ENCODE measurements at regions of chr7 and their contacts with region 1.

Region 1: GRCh38 chr7:1412322-1413261 is 46.7 kb downstream of the MICALL2 start:
- DNase-seq: peak; percentile 90
- H3K4me3 Mint-ChIP-seq: peak overlapping the region; percentile 16
- H3K27ac Mint-ChIP-seq: no peak overlapping the region
- H3K4me1 Mint-ChIP-seq: peaks cover 11% of the 10 kb centered on the region
- H3K27me3 Mint-ChIP-seq: peaks cover 2% of the 10 kb centered on the region

Region 2: DNA sequence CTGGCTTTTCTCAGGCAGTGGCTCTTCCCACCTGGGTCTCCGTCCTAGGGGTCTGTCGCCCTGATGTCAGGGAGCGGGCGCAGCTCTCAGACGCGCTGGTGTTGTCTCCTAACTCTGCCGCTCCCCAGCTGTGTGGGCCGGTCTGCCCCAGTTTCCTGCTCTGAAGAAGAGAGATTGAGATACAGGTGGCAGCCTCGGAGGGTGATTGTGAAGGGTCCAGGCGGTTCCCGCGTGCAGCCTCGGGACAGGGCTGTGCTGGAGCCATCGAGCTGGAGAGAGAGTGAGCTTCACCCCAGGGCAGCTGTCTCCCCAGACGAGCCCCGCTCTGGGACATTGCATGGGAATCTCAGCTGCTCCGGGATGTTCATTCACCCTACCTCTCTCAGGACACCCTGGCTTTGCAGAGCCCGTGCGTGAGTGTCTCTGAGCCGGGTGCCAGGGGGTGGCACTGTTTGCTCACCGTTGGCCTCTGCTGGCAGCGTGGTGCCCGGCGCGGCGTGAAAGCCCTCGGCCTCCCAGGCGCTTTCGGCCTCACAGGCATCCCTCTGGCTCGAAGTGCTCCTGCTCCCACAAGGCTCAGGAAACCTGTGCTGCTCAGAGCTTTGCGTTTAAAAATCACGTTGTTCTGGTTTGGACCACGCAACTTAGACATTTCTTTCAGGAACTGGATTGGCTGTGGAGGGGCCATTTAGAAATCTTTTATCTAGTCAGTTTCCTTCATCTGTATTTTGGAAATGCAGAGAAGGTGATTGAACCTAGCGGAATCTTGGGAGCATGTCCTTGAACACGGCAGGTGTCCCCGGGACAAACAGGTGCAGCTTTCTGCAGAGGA is 218.8 kb before region 1 on chr7:
- CTCF ChIA-PET with region 1: interaction called, 5 read pairs
- intact Hi-C with region 1: loop called (anchors 1 kb)
- DNase-seq: peak; percentile 51
- H3K4me3 Mint-ChIP-seq: no peak overlapping the region
- H3K27ac Mint-ChIP-seq: no peak overlapping the region
- H3K4me1 Mint-ChIP-seq: peaks cover 12% of the 10 kb centered on the region
- H3K27me3 Mint-ChIP-seq: peaks cover 17% of the 10 kb centered on the region

Region 3: GRCh38 chr7:1225441-1226185 is 187.0 kb before region 1 on chr7:
- CTCF ChIA-PET with region 1: interaction called, 3 read pairs
- intact Hi-C with region 1: loop called (anchors 1 kb)
- DNase-seq: peak; percentile 49
- H3K4me3 Mint-ChIP-seq: no peak overlapping the region
- H3K27ac Mint-ChIP-seq: no peak overlapping the region
- H3K4me1 Mint-ChIP-seq: peaks cover 2% of the 10 kb centered on the region
- H3K27me3 Mint-ChIP-seq: peaks cover 56% of the 10 kb centered on the region

Region 4: GRCh38 chr7:1432411-1433082 is 20.0 kb after region 1 on chr7:
- CTCF ChIA-PET with region 1: interaction called, 22 read pairs
- intact Hi-C with region 1: loop called (anchors 1 kb)
- DNase-seq: peak; percentile 87
- H3K4me3 Mint-ChIP-seq: no peak overlapping the region
- H3K27ac Mint-ChIP-seq: no peak overlapping the region
- H3K4me1 Mint-ChIP-seq: peaks cover 3% of the 10 kb centered on the region
- H3K27me3 Mint-ChIP-seq: peaks cover 2% of the 10 kb centered on the region

Region 5: GRCh38 chr7:1459522-1459892 is 46.9 kb after region 1 on chr7:
- CTCF ChIA-PET with region 1: no interaction called
- intact Hi-C with region 1: loop called (anchors 1 kb)
- DNase-seq: peak; percentile 98
- H3K4me3 Mint-ChIP-seq: no peak overlapping the region
- H3K27ac Mint-ChIP-seq: no peak overlapping the region
- H3K4me1 Mint-ChIP-seq: peaks cover 19% of the 10 kb centered on the region
- H3K27me3 Mint-ChIP-seq: no peaks in the 10 kb centered on the region

Region 6: DNA sequence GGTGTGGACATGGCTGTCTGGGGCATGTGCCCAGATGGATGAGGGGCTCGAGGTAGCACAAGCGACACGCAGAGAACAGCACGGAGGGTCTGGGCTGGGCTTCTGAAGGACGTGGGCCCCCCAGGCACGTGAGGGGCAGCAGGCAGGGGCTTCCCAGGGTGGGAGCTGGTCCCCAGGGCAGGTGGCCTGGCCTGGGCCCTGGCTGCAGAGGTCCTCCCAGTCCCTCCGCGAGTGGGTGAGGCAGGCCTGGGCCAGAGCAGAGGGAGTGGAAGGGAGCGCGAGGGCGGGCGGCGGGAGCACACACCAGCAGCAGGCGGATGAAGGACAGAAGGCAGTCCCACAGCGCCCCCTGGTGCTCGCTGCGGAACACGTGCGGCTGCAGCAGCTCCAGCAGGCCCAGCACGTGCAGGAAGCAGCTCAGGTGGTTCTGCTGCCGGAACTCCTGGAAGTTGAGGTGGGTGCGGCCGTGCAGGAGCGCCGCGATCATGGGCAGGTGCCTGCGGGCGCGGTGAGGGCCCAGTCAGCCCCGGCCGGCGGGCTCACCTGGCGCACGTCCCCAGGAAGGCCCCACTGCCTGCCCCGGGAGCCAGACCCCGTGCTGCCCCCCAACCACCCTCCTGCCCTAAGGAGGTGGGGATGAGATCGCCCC is 61.4 kb after region 1 on chr7:
- CTCF ChIA-PET with region 1: interaction called, 3 read pairs
- intact Hi-C with region 1: loop called (anchors 1 kb)
- DNase-seq: peak; percentile 93
- H3K4me3 Mint-ChIP-seq: no peak overlapping the region
- H3K27ac Mint-ChIP-seq: no peak overlapping the region
- H3K4me1 Mint-ChIP-seq: peaks cover 10% of the 10 kb centered on the region
- H3K27me3 Mint-ChIP-seq: no peaks in the 10 kb centered on the region

Measured in activated naive CD4-positive, alpha-beta T cell treated with anti-CD3 and anti-CD28 coated beads for 36 hours (primary cell).